Activated naive CD4-positive, alpha-beta T cell treated with anti-CD3 and anti-CD28 coated beads, Interleukin-2, amount 10 ng/mL, durations not matched to agents 7 days and 5 days (primary cell): ENCODE measurements at regions of chr1 and their contacts with region 1.

Region 1: GRCh38 chr1:34865981-34866761 is 6.6 kb upstream of the SMIM12 start:
- DNase-seq: peak; percentile 93
- H3K4me3 Mint-ChIP-seq: peak overlapping the region; percentile 76
- H3K27ac Mint-ChIP-seq: peak overlapping the region; percentile 90
- H3K4me1 Mint-ChIP-seq: peaks cover 32% of the 10 kb centered on the region
- H3K27me3 Mint-ChIP-seq: peaks cover 26% of the 10 kb centered on the region

Region 2: GRCh38 chr1:34786521-34787325 is 79.4 kb before region 1 on chr1:
- CTCF ChIA-PET with region 1: interaction called, 12 read pairs
- DNase-seq: peak; percentile 79
- H3K4me3 Mint-ChIP-seq: no peak overlapping the region
- H3K27ac Mint-ChIP-seq: no peak overlapping the region
- H3K4me1 Mint-ChIP-seq: peaks cover 4% of the 10 kb centered on the region
- H3K27me3 Mint-ChIP-seq: peaks cover 55% of the 10 kb centered on the region

Region 3: DNA sequence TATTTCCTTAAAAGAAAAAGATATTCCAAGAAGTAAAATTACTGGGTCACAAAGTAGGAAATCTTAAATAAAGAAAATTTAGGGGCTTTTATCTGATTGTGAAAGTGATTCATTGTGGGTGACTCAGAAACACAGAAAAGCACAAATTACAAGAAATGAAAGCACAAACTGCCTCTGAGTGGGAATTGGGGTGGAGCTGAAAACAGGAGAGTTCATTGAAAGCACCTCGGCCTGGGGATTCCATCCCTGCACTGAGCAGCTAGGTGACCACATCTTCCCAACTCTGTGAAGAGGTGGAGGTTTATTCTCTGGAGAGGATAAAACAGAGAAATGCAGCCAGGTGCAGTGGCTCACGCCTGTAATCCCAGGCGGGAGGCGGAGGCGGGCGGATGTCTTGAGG is 66.0 kb before region 1 on chr1:
- CTCF ChIA-PET with region 1: no interaction called
- DNase-seq: no peak
- H3K4me3 Mint-ChIP-seq: no peak overlapping the region
- H3K27ac Mint-ChIP-seq: no peak overlapping the region
- H3K4me1 Mint-ChIP-seq: no peaks in the 10 kb centered on the region
- H3K27me3 Mint-ChIP-seq: peaks cover under 1% of the 10 kb centered on the region

Region 4: DNA sequence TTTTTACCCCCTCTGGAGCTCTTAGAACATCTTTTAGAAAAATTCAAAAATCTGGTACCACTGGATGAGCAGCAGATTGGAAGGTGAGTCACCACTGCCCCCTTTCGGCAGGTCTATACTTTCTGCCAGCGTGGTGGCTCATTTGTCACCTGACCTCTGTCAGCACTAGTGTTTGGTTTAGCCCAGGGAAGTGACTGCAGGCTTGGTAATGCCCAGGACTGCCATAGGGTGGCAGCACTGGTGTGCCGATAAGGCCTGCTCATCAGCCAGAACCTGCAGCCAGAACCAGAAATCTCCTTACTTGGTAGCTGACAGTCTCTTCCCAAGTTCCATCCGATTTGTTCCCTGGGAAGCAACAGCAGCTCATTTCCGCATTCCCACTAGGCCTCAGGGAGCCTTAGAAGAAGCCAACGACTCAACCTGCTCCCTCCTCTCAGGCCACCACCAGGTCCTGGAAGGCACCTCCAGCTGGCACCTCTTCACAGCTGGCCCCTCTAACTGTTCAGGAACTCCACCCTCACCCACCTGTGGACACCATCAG is 13.4 kb before region 1 on chr1:
- CTCF ChIA-PET with region 1: interaction called, 58 read pairs
- DNase-seq: peak; percentile 94
- H3K4me3 Mint-ChIP-seq: no peak overlapping the region
- H3K27ac Mint-ChIP-seq: no peak overlapping the region
- H3K4me1 Mint-ChIP-seq: peaks cover 24% of the 10 kb centered on the region
- H3K27me3 Mint-ChIP-seq: no peaks in the 10 kb centered on the region